Activated CD4-positive, alpha-beta T cell treated with anti-CD3 and anti-CD28 coated beads, Interleukin-2, amount 10 ng/mL, durations not matched to agents 24 days and 14 days (primary cell): ENCODE measurements at regions of chr7 and their contacts with region 1.

Region 1: DNA sequence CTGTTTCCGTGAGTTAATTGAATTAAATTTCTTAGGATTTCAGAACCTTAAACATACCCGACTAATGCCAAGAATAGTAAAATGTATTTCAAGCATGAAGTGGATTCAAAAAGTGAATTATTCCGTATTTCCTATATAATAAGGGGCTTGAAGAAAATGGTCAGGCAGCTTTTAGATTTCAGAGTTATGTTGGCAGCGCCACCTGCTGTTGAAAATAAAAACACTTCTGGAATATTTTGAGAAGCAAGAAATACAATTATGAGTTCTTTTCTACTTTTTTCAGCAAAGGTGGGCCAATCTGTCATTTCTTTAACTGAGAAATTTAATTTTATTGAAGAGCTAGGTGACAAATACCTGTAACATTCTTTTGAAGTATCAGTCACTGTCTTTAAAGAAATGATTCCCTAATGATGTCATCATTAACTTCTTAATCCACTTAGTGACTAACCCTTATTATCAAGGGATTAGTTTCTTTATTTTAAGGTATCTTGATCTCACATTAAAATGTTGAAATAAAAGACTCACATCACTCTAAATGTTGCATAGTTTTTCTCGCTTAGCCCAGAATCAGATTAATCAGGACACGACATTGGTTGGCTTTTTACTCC is 36.6 kb upstream of the AGR3 start:
- DNase-seq: peak; percentile 71
- H3K4me3 Mint-ChIP-seq: no peak overlapping the region
- H3K27ac Mint-ChIP-seq: no peak overlapping the region
- H3K4me1 Mint-ChIP-seq: peaks cover 19% of the 10 kb centered on the region
- H3K27me3 Mint-ChIP-seq: no peaks in the 10 kb centered on the region

Region 2: GRCh38 chr7:16078076-16078952 is 840.1 kb before region 1 on chr7:
- intact Hi-C with region 1: loop called (anchors 5 kb)
- DNase-seq: peak; percentile 72
- H3K4me3 Mint-ChIP-seq: no peak overlapping the region
- H3K27ac Mint-ChIP-seq: no peak overlapping the region
- H3K4me1 Mint-ChIP-seq: no peaks in the 10 kb centered on the region
- H3K27me3 Mint-ChIP-seq: no peaks in the 10 kb centered on the region

Region 3: GRCh38 chr7:16604054-16604453 is 314.3 kb before region 1 on chr7:
- intact Hi-C with region 1: loop called (anchors 1 kb)
- DNase-seq: no peak
- H3K4me3 Mint-ChIP-seq: no peak overlapping the region
- H3K27ac Mint-ChIP-seq: no peak overlapping the region
- H3K4me1 Mint-ChIP-seq: no peaks in the 10 kb centered on the region
- H3K27me3 Mint-ChIP-seq: no peaks in the 10 kb centered on the region

Region 4: DNA sequence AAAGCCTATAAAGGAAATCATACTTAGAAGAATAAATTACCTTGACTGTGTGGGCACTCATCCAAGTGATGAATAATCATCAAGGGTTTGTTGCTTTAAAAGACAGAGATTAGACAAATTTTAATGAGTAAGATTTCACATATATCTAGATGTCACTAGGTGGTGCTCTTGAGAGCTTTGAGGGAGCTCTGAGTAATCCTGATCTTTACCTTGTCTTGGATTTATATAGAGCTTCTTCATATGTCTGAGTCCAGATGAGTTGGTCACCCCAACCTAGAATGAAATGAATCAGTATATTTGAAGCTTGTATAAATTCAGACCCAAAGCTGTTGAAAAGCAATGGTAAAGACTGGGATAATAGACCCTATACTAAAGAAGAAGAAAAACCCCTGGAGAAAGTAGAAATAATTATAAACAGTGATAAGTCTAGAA is 117.3 kb before region 1 on chr7:
- intact Hi-C with region 1: loop called (anchors 1 kb)
- DNase-seq: no peak
- H3K4me3 Mint-ChIP-seq: no peak overlapping the region
- H3K27ac Mint-ChIP-seq: no peak overlapping the region
- H3K4me1 Mint-ChIP-seq: no peaks in the 10 kb centered on the region
- H3K27me3 Mint-ChIP-seq: peaks cover 7% of the 10 kb centered on the region

Region 5: DNA sequence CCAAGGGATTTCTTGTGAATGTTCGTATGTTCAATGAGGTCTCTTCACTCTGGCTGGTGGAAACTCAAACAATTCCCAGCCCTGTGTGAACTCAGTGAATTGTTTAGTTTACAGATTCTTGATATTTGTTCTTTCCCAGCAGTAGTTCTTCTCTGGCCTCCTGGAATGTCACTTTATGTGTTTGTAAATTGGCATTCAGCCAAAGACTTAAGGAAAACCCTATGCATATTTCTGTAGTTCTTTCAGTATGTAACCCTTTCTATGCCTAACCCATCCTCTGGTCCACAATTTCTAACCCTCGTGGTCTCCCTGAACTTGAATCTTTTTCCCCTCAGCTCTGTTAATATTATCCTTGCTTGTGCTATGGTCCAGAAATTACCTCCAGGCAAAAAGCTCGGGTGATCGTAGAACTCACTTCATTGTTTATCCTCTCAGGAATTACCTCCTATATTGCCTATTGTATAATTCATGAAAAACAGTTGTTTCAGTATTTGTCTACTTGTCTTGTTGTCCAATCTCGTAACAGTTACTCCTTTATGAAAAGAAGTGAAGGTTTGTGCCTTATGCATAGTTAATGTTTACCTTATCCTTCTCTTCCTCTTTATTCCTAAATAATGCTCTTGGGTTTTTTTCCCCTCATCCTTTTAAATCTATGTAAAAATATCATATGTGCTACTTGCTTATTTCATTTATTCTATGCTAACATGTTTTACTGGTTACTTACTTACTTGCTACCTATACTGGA is 12.9 kb before region 1 on chr7:
- intact Hi-C with region 1: no loop called
- DNase-seq: no peak
- H3K4me3 Mint-ChIP-seq: no peak overlapping the region
- H3K27ac Mint-ChIP-seq: no peak overlapping the region
- H3K4me1 Mint-ChIP-seq: no peaks in the 10 kb centered on the region
- H3K27me3 Mint-ChIP-seq: peaks cover 28% of the 10 kb centered on the region

Region 6: DNA sequence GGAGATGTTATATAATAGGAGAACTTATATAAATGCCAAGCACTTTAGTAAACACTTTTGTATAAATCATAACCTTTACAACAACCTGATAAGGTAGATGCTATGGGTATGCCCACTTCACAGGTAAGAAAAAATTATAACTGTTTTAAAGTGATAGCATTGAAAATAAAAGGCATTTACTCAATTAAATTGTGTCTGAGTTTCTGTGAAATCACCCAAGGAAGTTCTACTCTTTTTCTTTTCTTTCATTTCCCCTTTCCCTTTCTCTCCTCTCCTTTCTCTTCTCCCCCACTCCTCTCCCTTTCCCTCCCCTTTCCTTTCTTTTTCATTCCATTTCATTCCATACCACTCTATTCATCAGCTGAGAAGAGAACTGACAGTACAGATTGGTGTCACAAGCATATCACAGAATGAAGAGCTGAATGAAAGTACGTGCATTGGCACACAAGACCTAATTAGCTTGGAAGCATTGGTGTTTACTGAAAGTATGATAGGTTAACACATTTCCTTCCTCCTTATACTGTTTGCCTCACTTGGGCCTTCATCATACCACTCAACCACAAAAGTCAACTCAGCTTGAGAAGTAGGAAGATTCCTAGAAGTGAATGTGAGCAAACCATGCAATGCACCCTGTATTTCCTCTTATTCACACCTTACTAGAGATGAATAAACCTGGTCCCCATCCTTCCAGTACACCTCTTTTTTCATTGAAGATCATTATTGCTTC is 81.3 kb after region 1 on chr7:
- intact Hi-C with region 1: loop called (anchors 2 kb)
- DNase-seq: peak; percentile 76
- H3K4me3 Mint-ChIP-seq: peak overlapping the region; percentile 63
- H3K27ac Mint-ChIP-seq: peak overlapping the region; percentile 84
- H3K4me1 Mint-ChIP-seq: peaks cover 15% of the 10 kb centered on the region
- H3K27me3 Mint-ChIP-seq: peaks cover 6% of the 10 kb centered on the region

Region 7: GRCh38 chr7:17099083-17099973 is 180.9 kb after region 1 on chr7:
- intact Hi-C with region 1: no loop called
- DNase-seq: no peak
- H3K4me3 Mint-ChIP-seq: no peak overlapping the region
- H3K27ac Mint-ChIP-seq: no peak overlapping the region
- H3K4me1 Mint-ChIP-seq: no peaks in the 10 kb centered on the region
- H3K27me3 Mint-ChIP-seq: no peaks in the 10 kb centered on the region